Heart left ventricle (tissue), 16 donors: ENCODE measurements at regions of chr13 and their contacts with region 1.

Region 1: DNA sequence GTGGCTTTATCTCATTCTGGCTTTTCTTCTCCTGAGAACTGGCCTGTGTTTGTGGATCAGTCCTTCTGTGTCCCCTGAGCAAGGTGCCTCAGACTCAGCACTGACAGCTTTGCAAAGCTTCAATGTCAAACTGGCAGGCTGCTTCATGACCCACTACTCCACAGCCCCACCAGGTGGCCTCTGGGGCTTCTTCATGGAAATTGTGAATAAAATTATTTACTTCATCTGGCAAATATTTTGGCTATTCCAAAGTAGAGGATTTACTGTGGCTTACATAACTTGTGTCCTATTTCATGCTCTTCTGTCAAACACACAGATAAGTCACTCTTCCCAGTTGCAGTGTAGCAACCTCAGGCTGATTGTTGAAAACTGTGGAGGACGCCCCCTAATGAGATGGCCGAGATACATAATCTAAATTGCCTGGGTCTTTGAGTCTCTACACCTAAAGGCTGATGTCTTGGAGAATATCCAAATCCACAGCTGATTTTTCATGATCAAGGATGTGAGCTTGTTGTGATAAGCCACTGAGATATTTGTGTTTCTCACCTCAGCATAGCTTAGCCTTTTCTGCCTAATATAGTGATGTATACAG is 721.9 kb upstream of the SLC10A2 start:
- DNase-seq: peak in 3 of 5 donors; percentile 12 to 51 (median 31)
- ATAC-seq: peak in 3 of 4 donors; percentile 79 to 82 (median 81)
- H3K4me3 ChIP-seq: no peak overlapping the region
- H3K27ac ChIP-seq: no peak overlapping the region
- H3K4me1 ChIP-seq: peaks cover 0 to 6% (median 0%) of the 10 kb centered on the region in 12 donors
- H3K27me3 ChIP-seq: no peaks in the 10 kb centered on the region
- CTCF ChIP-seq: peak; percentile 12 to 45 (median 39)
- POLR2A ChIP-seq: no peak

Region 2: DNA sequence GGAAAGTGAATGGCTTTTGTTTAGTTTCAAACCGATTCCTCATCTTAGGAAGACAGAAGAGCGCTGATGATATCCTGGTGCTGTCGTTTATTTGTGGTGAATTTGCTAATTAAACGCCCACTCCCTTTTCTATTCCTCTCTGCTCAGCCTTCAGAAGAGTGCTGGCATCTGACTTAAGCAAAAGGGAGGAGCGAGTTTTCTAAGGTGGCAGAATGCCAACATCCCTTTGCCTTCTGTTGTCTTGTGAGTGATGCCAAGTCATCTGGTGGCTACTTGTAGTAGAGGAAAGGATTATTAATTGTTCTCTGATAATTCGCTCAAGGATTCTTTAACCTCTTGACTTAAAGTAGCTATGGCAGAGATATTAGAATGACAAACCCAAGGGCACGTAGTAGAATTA is 874.2 kb before region 1 on chr13:
- intact Hi-C with region 1: loop called in 1 of 10 experiments (anchors 5 kb)
- DNase-seq: no peak
- ATAC-seq: no peak
- H3K4me3 ChIP-seq: no peak overlapping the region
- H3K27ac ChIP-seq: no peak overlapping the region
- H3K4me1 ChIP-seq: peaks cover 0 to 11% (median 0%) of the 10 kb centered on the region in 12 donors
- H3K27me3 ChIP-seq: no peaks in the 10 kb centered on the region
- CTCF ChIP-seq: no peak
- POLR2A ChIP-seq: no peak

Region 3: GRCh38 chr13:102999499-102999898 is 788.7 kb before region 1 on chr13:
- intact Hi-C with region 1: no loop called
- DNase-seq: no peak
- ATAC-seq: no peak
- H3K4me3 ChIP-seq: no peak overlapping the region
- H3K27ac ChIP-seq: no peak overlapping the region
- H3K4me1 ChIP-seq: peaks cover 0 to 3% (median 0%) of the 10 kb centered on the region in 12 donors
- H3K27me3 ChIP-seq: no peaks in the 10 kb centered on the region
- CTCF ChIP-seq: no peak
- POLR2A ChIP-seq: no peak

Region 4: GRCh38 chr13:103188713-103189326 is 599.3 kb before region 1 on chr13:
- intact Hi-C with region 1: loop called in 6 of 10 experiments (anchors 5 to 10 kb)
- DNase-seq: no peak
- ATAC-seq: no peak
- H3K4me3 ChIP-seq: no peak overlapping the region
- H3K27ac ChIP-seq: no peak overlapping the region
- H3K4me1 ChIP-seq: peaks cover 0 to 6% (median 0%) of the 10 kb centered on the region in 12 donors
- H3K27me3 ChIP-seq: no peaks in the 10 kb centered on the region
- CTCF ChIP-seq: peak; percentile 18 to 64 (median 53)
- POLR2A ChIP-seq: no peak

Region 5: DNA sequence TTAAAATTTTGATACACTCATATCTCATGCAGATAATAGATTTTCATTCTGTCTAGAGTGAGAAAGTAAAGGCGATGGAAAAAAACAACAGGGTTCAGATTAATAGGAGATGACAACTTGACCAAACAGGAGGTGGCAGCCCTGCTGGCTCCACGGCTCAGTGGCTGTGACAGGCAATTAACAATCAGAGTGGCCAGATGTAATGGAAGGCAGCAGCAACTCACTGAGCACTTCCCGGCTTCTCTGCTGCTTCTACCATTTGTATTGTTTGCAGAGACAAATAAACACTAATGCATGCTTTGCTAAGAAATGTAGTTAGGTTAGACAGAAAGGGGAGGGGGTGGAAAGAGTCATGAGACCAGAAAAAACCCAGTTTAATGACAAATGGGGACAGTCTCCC is 248.9 kb before region 1 on chr13:
- intact Hi-C with region 1: loop called in 1 of 10 experiments (anchors 10 kb)
- DNase-seq: peak in 2 of 5 donors; percentile 7 to 27
- ATAC-seq: no peak
- H3K4me3 ChIP-seq: no peak overlapping the region
- H3K27ac ChIP-seq: no peak overlapping the region
- H3K4me1 ChIP-seq: no peaks in the 10 kb centered on the region
- H3K27me3 ChIP-seq: no peaks in the 10 kb centered on the region
- CTCF ChIP-seq: no peak
- POLR2A ChIP-seq: no peak